HEK293 (cell line): ENCODE measurements at regions of chr6 and their contacts with region 1.

Region 1: GRCh38 chr6:108558372-108559096 is 2.2 kb upstream of the FOXO3 start:
- H3K4me3 ChIP-seq: peak overlapping the region; percentile 85
- H3K27ac ChIP-seq: peak overlapping the region; percentile 100
- H3K4me1 ChIP-seq: peaks cover 7% of the 10 kb centered on the region
- CTCF ChIP-seq: no peak

Region 2: GRCh38 chr6:108578595-108579327 is 20.2 kb after region 1 on chr6:
- CTCF ChIA-PET with region 1: interaction called, 6 read pairs
- POLR2A ChIA-PET with region 1: interaction called, 15 read pairs
- H3K4me3 ChIP-seq: no peak overlapping the region
- H3K27ac ChIP-seq: no peak overlapping the region
- H3K4me1 ChIP-seq: peaks cover 34% of the 10 kb centered on the region
- CTCF ChIP-seq: no peak

Region 3: GRCh38 chr6:108592371-108593337 is 34.1 kb after region 1 on chr6:
- CTCF ChIA-PET with region 1: no interaction called
- POLR2A ChIA-PET with region 1: interaction called, 14 read pairs
- H3K4me3 ChIP-seq: no peak overlapping the region
- H3K27ac ChIP-seq: no peak overlapping the region
- H3K4me1 ChIP-seq: peaks cover 64% of the 10 kb centered on the region
- CTCF ChIP-seq: no peak

Region 4: DNA sequence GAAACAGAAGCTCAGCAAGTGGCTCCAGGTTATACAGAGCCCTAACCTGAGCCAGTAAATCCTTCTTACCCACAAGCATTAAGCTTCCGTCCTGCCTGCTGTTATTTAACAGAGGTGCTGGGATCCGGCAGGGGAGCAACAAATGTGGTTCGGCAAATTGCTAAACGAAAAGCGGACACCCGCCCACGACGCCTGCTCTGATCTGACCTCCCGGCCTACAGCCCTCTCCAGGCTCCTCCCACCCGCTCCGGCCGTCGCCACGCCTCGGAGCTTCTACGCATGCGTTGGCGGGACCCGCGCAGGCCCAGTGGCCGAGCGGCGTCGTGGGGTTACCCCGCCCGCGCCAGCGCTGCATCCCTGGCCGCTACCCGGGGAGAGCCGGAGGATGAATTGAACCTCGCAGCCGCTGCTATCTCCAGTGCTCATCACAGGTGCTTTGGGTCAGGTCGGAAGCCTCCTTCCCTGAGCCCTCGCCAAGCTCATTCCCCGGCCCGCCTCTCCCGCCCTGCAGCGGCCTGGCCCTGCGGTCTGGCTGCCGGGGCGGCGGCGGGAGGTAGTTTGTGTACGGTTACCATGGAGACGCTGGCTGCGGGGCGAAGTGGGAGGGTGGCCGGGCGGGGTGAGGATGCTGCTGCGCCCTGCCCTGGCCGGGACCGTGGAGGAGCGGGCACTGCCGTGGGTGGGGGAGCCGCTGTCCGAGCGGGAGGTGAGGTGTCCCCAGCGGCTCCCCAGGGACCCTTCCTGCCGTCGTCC is 289.8 kb after region 1 on chr6 and contains the start of gene ARMC2:
- CTCF ChIA-PET with region 1: no interaction called
- POLR2A ChIA-PET with region 1: interaction called, 24 read pairs
- H3K4me3 ChIP-seq: peak within 1 kb of the TSS; percentile 72
- H3K27ac ChIP-seq: no peak within 1 kb of the TSS; the same call in 1 of the 2 replicates
- H3K4me1 ChIP-seq: peaks cover 4% of the 10 kb centered on the region; the same call in 1 of the 2 replicates
- CTCF ChIP-seq: no peak

Region 5: DNA sequence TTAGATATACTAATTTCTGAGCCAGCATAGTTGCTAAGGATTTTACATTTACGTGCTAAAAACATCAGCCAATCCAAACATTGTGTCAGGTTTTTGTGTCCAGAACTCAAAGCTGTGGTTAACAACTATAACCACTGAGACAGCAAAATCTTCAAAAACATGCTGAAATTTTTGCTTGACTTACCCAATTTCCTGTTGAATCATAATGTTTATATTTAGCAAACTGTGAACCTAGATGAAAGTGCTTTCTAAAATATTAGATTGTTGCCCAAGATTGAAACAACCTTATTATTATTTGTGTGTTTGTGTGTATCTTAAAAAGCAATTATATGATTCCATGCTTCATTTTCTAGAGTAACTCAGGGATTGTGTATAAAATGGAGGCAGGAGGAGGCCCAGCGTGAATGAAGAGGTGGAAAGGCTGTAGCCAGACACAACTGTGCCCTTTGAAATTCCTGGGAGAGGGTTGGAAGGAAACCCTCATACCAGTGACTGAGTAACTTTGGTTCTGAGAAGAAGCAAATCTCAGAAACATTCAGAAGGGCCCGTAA is 337.7 kb after region 1 on chr6:
- CTCF ChIA-PET with region 1: interaction called, 10 read pairs
- POLR2A ChIA-PET with region 1: no interaction called
- H3K4me3 ChIP-seq: no peak overlapping the region
- H3K27ac ChIP-seq: no peak overlapping the region
- H3K4me1 ChIP-seq: no peaks in the 10 kb centered on the region
- CTCF ChIP-seq: no peak